SK-N-SH (cell line): ENCODE measurements at regions of chr3 and their contacts with region 1.

Region 1: DNA sequence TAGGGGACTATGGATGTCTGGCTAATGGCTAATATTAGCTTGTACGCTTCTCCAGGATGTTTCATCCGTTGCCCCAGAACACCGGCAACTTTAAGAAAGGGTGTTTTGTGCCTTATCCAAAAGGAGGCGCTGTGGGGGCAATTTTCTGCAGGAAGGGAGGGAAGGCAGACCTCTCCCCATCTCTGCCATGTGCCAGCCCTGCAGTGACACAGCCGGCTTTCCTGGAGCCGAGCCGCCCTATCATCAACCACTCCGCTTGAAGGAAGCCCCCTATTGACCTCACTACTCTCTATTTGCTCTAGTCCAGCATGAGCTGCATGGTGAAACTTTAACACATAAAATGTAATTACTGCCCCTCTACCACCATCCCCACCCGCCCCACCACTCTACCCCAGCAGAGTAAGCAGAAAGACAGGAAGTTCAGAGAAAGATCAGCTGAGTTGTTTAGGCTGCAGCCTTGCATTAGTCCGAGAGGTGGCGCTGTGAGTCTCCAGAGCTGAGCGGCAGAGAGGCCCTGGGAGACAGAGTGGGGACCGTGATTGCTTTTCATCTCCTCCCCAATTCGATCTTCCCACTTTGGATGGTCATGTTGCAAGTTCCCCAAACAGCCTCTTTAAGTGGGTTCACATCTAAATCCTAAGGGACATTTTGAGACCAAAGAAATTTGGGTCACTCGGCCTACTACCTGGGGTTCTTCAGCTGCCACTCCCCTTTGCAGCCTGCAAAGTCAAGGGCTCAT is 24.5 kb upstream of the RAD18 start:
- DNase-seq: peak; percentile 91
- H3K4me3 ChIP-seq: no peak overlapping the region; a peak in 1 of 4 replicates
- H3K27ac ChIP-seq: no peak overlapping the region
- H3K4me1 ChIP-seq: peaks cover 0 to 4% of the 10 kb centered on the region in 2 experiments; a peak in 1 of 4 replicates
- H3K27me3 ChIP-seq: no peaks in the 10 kb centered on the region
- CTCF ChIP-seq: peak; percentile 74
- EP300 ChIP-seq: no peak
- RAD21 ChIP-seq: peak; percentile 85

Region 2: GRCh38 chr3:8899986-8900385 is 87.8 kb before region 1 on chr3:
- CTCF ChIA-PET with region 1: no interaction called
- POLR2A ChIA-PET with region 1: no interaction called
- DNase-seq: no peak
- H3K4me3 ChIP-seq: no peak overlapping the region
- H3K27ac ChIP-seq: peak overlapping the region in 1 of 2 experiments; percentile 7; a peak in 1 of 4 replicates
- H3K4me1 ChIP-seq: peaks cover 2 to 11% of the 10 kb centered on the region in 2 experiments; a peak in 3 of 4 replicates
- H3K27me3 ChIP-seq: no peaks in the 10 kb centered on the region
- CTCF ChIP-seq: no peak
- EP300 ChIP-seq: no peak
- RAD21 ChIP-seq: peak; percentile 28

Region 3: DNA sequence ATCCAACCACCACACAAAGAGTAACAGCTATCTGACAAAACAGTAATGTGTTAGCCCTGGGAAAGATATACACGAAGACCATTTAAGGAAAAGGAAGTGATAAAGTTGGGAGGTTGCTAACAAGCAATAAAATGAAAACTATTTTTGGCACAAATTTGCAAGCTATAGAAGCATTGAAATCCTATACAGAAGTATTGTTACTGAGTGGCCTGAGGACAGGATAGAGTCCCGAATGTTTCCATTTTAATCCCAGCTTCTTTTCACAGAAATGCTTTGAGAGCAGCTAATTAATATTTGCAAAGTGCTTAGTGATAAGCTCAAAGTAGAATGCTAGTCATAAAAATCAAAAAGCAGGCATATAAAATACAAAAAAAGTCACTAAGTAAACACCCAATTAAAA is 76.0 kb before region 1 on chr3:
- CTCF ChIA-PET with region 1: no interaction called
- POLR2A ChIA-PET with region 1: no interaction called
- DNase-seq: no peak
- H3K4me3 ChIP-seq: no peak overlapping the region
- H3K27ac ChIP-seq: no peak overlapping the region
- H3K4me1 ChIP-seq: peaks cover 0 to 6% of the 10 kb centered on the region in 2 experiments; a peak in 2 of 4 replicates
- H3K27me3 ChIP-seq: no peaks in the 10 kb centered on the region
- CTCF ChIP-seq: no peak
- EP300 ChIP-seq: no peak
- RAD21 ChIP-seq: no peak

Region 4: GRCh38 chr3:8954938-8955763 is 32.7 kb before region 1 on chr3:
- CTCF ChIA-PET with region 1: no interaction called
- POLR2A ChIA-PET with region 1: no interaction called
- DNase-seq: no peak
- H3K4me3 ChIP-seq: no peak overlapping the region
- H3K27ac ChIP-seq: peak overlapping the region in 1 of 2 experiments; percentile 43; a peak in 1 of 4 replicates
- H3K4me1 ChIP-seq: peaks cover 8% of the 10 kb centered on the region in 2 experiments; a peak in 3 of 4 replicates
- H3K27me3 ChIP-seq: no peaks in the 10 kb centered on the region
- CTCF ChIP-seq: peak; percentile 11; the same call in 1 of the 2 replicates
- EP300 ChIP-seq: no peak
- RAD21 ChIP-seq: no peak

Region 5: GRCh38 chr3:9008550-9009255 is 20.9 kb after region 1 on chr3:
- CTCF ChIA-PET with region 1: interaction called, 16 read pairs
- POLR2A ChIA-PET with region 1: no interaction called
- DNase-seq: no peak
- H3K4me3 ChIP-seq: no peak overlapping the region
- H3K27ac ChIP-seq: no peak overlapping the region
- H3K4me1 ChIP-seq: no peaks in the 10 kb centered on the region; a peak in 1 of 4 replicates
- H3K27me3 ChIP-seq: no peaks in the 10 kb centered on the region
- CTCF ChIP-seq: no peak
- EP300 ChIP-seq: no peak
- RAD21 ChIP-seq: no peak

Region 6: GRCh38 chr3:9047452-9048346 is 59.9 kb after region 1 on chr3:
- CTCF ChIA-PET with region 1: interaction called, 14 read pairs
- POLR2A ChIA-PET with region 1: no interaction called
- DNase-seq: no peak
- H3K4me3 ChIP-seq: no peak overlapping the region
- H3K27ac ChIP-seq: no peak overlapping the region
- H3K4me1 ChIP-seq: no peaks in the 10 kb centered on the region
- H3K27me3 ChIP-seq: no peaks in the 10 kb centered on the region
- CTCF ChIP-seq: no peak
- EP300 ChIP-seq: no peak
- RAD21 ChIP-seq: no peak

Region 7: GRCh38 chr3:9081184-9081818 is 93.5 kb after region 1 on chr3:
- CTCF ChIA-PET with region 1: interaction called, 10 read pairs
- POLR2A ChIA-PET with region 1: no interaction called
- DNase-seq: no peak
- H3K4me3 ChIP-seq: no peak overlapping the region
- H3K27ac ChIP-seq: no peak overlapping the region
- H3K4me1 ChIP-seq: no peaks in the 10 kb centered on the region
- H3K27me3 ChIP-seq: no peaks in the 10 kb centered on the region
- CTCF ChIP-seq: no peak
- EP300 ChIP-seq: no peak
- RAD21 ChIP-seq: no peak

Region 8: DNA sequence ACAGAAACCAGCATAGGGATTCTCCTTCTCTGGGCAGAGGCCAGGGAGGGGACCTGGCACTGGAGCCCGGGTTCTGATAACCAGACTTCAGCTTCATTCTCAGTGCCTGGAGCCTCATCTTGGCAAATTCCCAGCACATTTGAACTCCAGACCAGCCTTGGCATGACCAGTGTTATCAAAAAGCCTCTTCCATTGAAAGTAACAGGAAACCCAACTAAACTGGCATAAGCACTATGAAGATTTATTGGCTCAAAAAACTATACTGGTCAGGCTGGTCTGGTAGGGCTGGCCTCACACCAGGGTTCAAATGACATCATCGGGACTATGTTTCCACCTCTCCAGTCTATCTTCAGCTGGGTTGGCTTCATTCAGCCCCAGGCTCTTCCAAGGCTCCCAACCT is 327.0 kb after region 1 on chr3:
- CTCF ChIA-PET with region 1: interaction called, 13 read pairs
- POLR2A ChIA-PET with region 1: no interaction called
- DNase-seq: peak; percentile 58
- H3K4me3 ChIP-seq: no peak overlapping the region
- H3K27ac ChIP-seq: peak overlapping the region in 1 of 2 experiments; percentile 1; a peak in 1 of 4 replicates
- H3K4me1 ChIP-seq: peaks cover 0 to 10% of the 10 kb centered on the region in 2 experiments; a peak in 1 of 4 replicates
- H3K27me3 ChIP-seq: no peaks in the 10 kb centered on the region
- CTCF ChIP-seq: no peak
- EP300 ChIP-seq: peak in 1 of 2 experiments; percentile 52; a peak in 2 of 4 replicates
- RAD21 ChIP-seq: no peak

Region 9: GRCh38 chr3:10310578-10310977 is 1322.8 kb after region 1 on chr3:
- CTCF ChIA-PET with region 1: no interaction called
- POLR2A ChIA-PET with region 1: no interaction called
- DNase-seq: no peak
- H3K4me3 ChIP-seq: no peak overlapping the region
- H3K27ac ChIP-seq: peak overlapping the region in 1 of 2 experiments; percentile 14; a peak in 1 of 4 replicates
- H3K4me1 ChIP-seq: peaks cover 0 to 5% of the 10 kb centered on the region in 2 experiments; a peak in 1 of 4 replicates
- H3K27me3 ChIP-seq: no peaks in the 10 kb centered on the region
- CTCF ChIP-seq: no peak
- EP300 ChIP-seq: no peak
- RAD21 ChIP-seq: no peak